Breast epithelium (tissue), 4 donors: ENCODE measurements at regions of chr1 and their contacts with region 1.

Region 1: DNA sequence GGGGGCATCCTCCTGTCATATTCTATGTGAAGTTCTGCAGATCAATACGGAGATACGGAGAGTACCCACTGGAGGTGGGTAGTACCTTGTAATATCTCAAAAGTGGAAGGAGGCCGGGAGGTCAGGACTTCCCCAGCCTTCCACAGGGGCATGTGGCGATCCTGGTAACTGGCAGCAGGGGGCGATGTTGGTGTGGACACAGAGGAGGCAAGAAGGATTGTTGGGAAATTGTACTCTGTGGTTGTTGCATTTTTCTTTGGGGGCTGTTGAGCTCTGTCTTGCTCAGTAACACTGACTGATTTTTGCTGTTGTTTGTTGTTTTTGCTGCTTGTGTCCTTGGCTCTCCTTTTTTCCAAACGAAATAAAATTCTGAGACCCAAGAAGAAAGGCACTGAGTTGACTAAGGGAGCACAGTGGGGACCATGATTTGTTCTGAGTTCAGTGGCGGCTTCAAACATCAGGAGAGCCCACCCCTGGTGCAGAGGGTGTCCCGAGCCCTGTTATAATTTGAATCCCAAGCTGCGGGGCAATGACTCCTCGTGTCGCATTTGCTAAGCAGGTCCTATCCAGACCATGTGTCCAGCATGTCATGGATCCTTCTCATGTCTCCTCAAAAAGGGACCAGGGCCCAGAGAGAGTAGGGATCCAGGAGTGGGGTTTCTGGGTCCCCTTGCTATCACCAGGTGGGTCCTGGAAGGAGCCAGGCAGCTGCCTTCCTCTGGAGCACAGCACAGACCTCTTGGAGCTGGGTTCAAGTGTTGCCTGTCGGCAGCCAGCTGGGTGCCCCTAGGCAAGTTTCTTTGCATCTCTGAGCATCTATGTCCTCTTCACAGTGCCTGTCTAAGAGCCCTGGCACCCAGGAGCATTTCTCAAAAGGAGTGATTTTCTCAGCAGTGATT is 22.8 kb downstream of the LHX4 start:
- DNase-seq: no peak
- H3K4me3 ChIP-seq: no peak overlapping the region
- H3K27ac ChIP-seq: no peak overlapping the region
- H3K4me1 ChIP-seq: no peaks in the 10 kb centered on the region
- H3K27me3 ChIP-seq: peaks cover 0 to 44% of the 10 kb centered on the region in 2 donors
- CTCF ChIP-seq: peak in 2 of 3 donors; percentile 51 to 59
- POLR2A ChIP-seq: no peak

Region 2: GRCh38 chr1:179380299-179380698 is 872.6 kb before region 1 on chr1:
- intact Hi-C with region 1: no loop called
- DNase-seq: no peak
- H3K4me3 ChIP-seq: no peak overlapping the region
- H3K27ac ChIP-seq: no peak overlapping the region
- H3K4me1 ChIP-seq: no peaks in the 10 kb centered on the region
- H3K27me3 ChIP-seq: no peaks in the 10 kb centered on the region
- CTCF ChIP-seq: no peak
- POLR2A ChIP-seq: no peak

Region 3: GRCh38 chr1:180201451-180202200 is 51.3 kb before region 1 on chr1:
- intact Hi-C with region 1: loop called (anchors 2 kb)
- DNase-seq: no peak
- H3K4me3 ChIP-seq: no peak overlapping the region
- H3K27ac ChIP-seq: no peak overlapping the region
- H3K4me1 ChIP-seq: no peaks in the 10 kb centered on the region
- H3K27me3 ChIP-seq: no peaks in the 10 kb centered on the region
- CTCF ChIP-seq: no peak
- POLR2A ChIP-seq: no peak